HEK293 (cell line): ENCODE measurements at regions of chr11 and their contacts with region 1.

Region 1: GRCh38 chr11:84564180-84564866 is 1062.8 kb downstream of the DLG2 start:
- H3K4me3 ChIP-seq: no peak overlapping the region
- H3K27ac ChIP-seq: no peak overlapping the region
- H3K4me1 ChIP-seq: no peaks in the 10 kb centered on the region
- CTCF ChIP-seq: no peak

Region 2: DNA sequence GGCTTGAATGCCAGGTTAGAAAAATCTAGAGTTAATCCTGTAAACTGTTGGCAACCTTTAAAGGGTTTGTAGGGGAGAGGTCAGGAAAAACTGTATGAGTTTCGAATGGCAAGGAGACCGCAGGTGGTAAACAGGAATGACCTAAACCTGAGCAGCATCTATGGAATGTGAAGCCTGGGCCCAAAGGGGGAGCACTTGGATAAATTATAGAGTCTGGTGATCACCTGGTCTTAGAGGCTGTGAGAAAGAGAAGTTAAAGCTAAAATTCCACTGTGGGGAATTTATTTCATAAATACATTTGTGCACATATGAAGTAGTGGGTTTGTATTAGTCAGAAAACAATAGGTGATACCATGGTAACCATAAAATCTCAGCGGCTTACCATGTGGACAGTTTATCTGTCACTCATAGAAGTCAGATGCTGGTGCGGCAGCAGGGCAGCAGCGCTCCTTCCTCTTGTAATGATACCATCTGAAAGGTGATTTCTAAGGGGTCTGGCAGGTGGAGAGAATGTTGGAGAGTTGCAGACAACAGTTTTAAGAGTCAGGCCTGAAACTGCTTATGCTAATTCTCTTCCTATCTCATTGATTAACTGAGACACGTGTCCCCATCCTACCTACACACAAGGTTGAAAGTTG is 173.8 kb before region 1 on chr11:
- CTCF ChIA-PET with region 1: interaction called, 24 read pairs
- POLR2A ChIA-PET with region 1: no interaction called
- H3K4me3 ChIP-seq: no peak overlapping the region
- H3K27ac ChIP-seq: no peak overlapping the region
- H3K4me1 ChIP-seq: no peaks in the 10 kb centered on the region
- CTCF ChIP-seq: no peak